AG04449 (cell line): ENCODE measurements at regions of chr17 and their contacts with region 1.

Region 1: DNA sequence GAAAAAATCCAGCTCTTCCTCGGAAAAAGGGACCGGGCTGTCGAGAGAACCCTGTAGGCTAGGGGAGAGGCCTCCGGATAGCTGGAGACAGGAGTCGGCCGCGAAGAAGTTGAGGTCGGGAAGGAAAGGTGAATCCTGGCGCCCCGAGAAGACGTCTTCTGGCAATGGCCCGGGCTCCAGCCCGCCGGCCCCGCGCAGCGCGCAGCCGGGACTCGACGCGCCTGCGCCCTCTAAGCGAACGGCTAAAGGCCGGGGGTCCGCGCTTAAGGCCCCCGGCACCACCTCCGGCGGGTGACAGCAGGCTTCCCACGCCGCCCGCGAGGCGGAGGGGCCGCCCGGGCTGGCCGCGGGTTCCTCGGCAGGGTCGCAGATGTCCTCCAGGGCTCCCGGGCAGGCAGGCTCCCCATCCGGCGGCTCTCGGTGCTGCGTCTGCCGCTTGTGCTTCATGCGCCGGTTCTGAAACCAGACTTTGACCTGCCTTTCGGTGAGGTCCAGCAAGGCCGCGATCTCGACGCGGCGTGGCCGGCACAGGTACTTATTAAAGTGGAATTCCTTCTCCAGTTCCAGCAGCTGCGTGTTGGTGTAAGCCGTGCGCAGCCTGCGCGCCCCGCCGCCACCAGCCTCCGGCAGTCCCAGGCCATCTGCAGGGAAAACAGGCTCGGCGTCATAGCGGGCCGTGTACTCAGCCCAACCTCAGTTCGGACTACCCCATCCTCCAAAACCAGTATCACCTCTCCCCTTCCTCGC is 1.6 kb downstream of the HOXB2 start:
- DNase-seq: no peak
- H3K4me3 ChIP-seq: peak overlapping the region; percentile 84
- CTCF ChIP-seq: no peak

Region 2: GRCh38 chr17:48492401-48493298 is 50.6 kb before region 1 on chr17:
- CTCF ChIA-PET with region 1: interaction called, 10 read pairs
- POLR2A ChIA-PET with region 1: interaction called, 4 read pairs
- DNase-seq: no peak
- H3K4me3 ChIP-seq: peak overlapping the region; percentile 45
- CTCF ChIP-seq: peak; percentile 90